ENCODE measurements at regions of chr19 and their contacts with region 1.

Region 1: GRCh38 chr19:50025024-50025789 is at the start of gene VRK3:
- DNase-seq: peak; percentile 100
- H3K4me3 ChIP-seq: peak within 1 kb of the TSS; percentile 76 to 97 (median 82)
- H3K4me3 Mint-ChIP-seq: peak within 1 kb of the TSS; percentile 94 to 98
- H3K27ac ChIP-seq: peak within 1 kb of the TSS; percentile 73 to 91
- H3K27ac Mint-ChIP-seq: peak within 1 kb of the TSS; percentile 96 to 100 (median 99)
- H3K4me1 ChIP-seq: peaks cover 23 to 31% of the 10 kb centered on the region in 2 donors
- H3K4me1 Mint-ChIP-seq: peaks cover 40% of the 10 kb centered on the region
- H3K27me3 ChIP-seq: no peaks in the 10 kb centered on the region
- H3K27me3 Mint-ChIP-seq: peaks cover 0 to 8% (median 5%) of the 10 kb centered on the region in 3 donors
- CTCF ChIP-seq: peak; percentile 12
- polyA plus RNA-seq, gene VRK3: 42.8 to 47.3 (median 46.8) TPM

Region 2: DNA sequence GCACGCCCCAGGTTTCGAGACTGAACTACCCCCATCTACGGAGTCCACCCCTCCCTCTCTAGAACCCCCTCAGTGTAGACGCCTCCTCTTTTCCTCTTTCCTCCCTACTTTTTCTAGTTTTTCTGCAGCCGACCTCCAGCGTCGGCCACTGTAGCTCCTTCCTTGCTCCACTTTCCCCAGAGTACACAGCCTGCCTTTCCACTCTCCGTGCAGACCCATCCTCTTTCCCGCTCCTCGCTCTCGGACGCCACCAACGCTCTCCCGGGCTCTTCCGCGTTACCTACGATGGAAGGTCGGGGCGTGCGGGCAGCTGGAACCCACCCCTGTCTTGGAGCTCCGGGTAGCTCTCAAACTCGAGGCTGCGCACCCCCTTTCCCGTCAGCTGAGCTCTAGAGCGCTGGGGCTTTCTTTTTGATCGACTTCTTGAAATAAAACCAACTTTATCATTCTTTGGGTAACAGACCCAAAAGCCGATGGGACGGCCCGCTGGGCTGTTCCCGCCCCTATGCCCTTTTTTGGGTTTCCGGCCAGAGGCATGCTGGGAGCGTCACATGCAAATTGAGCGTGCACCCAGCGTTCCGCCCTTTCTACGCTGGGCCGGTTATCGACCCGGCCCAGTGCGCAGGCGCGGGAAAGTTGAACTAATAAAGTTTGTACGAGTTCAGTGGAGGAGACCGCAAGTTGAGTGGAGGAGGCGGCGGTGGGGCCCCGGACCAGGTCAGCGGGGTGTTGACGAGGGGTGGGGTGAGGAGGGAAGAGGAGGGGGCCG is 359.7 kb before region 1 on chr19 and contains the starts of genes BCL2L12 and IRF3:
- intact Hi-C with region 1: loop called in 1 of 2 experiments (anchors 10 kb)
- DNase-seq: peak; percentile 95 to 97 (median 95)
- H3K4me3 ChIP-seq: peak within 1 kb of the TSS; percentile 52 to 94 (median 72)
- H3K4me3 Mint-ChIP-seq: peak within 1 kb of the TSS; percentile 97 to 100
- H3K27ac ChIP-seq: peak within 1 kb of the TSS; percentile 52 to 78
- H3K27ac Mint-ChIP-seq: peak within 1 kb of the TSS; percentile 89 to 99 (median 94)
- H3K4me1 ChIP-seq: peaks cover 17 to 35% of the 10 kb centered on the region in 2 donors
- H3K4me1 Mint-ChIP-seq: peaks cover 32% of the 10 kb centered on the region
- H3K27me3 ChIP-seq: no peaks in the 10 kb centered on the region
- H3K27me3 Mint-ChIP-seq: no peaks in the 10 kb centered on the region
- CTCF ChIP-seq: no peak
- polyA plus RNA-seq, gene BCL2L12: 5.7 to 10.3 (median 8.6) TPM
- polyA plus RNA-seq, gene IRF3: 29.8 to 115 (median 41.1) TPM

Region 3: DNA sequence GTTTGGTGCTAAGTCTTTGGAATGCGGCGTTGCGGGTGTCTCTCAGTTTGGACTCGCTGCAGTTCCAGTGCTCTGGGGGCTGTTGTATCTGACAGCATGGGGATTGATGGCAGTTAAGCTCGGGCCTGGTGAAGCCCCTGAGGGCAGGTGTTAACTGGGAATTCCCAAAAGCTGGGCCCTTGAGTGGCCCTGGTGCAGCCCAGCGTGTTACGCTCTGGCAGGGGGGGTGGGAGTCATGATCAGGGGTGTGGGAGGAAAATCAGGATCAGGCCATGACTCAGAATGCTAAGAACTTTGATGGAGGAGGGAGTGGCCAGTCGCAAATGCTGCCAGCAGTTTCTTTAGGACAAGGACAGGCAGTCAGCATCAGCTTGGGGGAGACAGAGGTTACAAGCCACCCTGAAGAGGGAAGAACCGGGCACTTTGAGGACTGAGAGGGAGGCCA is 238.8 kb before region 1 on chr19:
- intact Hi-C with region 1: no loop called
- DNase-seq: no peak
- H3K4me3 ChIP-seq: no peak overlapping the region
- H3K4me3 Mint-ChIP-seq: no peak overlapping the region
- H3K27ac ChIP-seq: peak overlapping the region in 1 of 2 donors; percentile 11
- H3K27ac Mint-ChIP-seq: peak overlapping the region in 2 of 7 donors; percentile 32 to 50
- H3K4me1 ChIP-seq: peaks cover 10 to 12% of the 10 kb centered on the region in 2 donors
- H3K4me1 Mint-ChIP-seq: peaks cover 11% of the 10 kb centered on the region
- H3K27me3 ChIP-seq: no peaks in the 10 kb centered on the region
- H3K27me3 Mint-ChIP-seq: no peaks in the 10 kb centered on the region
- CTCF ChIP-seq: no peak

Region 4: DNA sequence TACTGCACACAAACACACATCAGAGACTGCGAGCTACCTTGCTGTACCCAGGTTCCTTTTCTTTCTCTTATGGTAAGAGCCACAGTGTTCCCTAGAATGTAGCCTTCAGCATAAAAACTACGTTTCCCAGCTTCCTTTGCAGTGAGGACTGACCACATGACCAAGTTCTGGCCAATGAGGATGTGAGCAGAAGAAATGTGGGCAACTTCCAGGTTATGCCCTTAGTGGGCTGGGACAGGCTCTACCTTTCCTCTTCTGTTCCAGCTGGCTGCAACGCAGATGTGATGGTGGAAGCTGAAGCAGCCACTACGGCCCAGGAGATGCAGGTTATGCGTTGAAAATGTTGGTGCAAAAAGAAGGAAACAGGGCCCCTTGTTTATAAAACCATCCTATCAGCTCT is 27.5 kb before region 1 on chr19:
- intact Hi-C with region 1: no loop called
- DNase-seq: peak; percentile 29 to 58 (median 54)
- H3K4me3 ChIP-seq: no peak overlapping the region
- H3K4me3 Mint-ChIP-seq: no peak overlapping the region
- H3K27ac ChIP-seq: no peak overlapping the region
- H3K27ac Mint-ChIP-seq: no peak overlapping the region
- H3K4me1 ChIP-seq: peaks cover 8 to 16% of the 10 kb centered on the region in 2 donors
- H3K4me1 Mint-ChIP-seq: peaks cover 10% of the 10 kb centered on the region
- H3K27me3 ChIP-seq: no peaks in the 10 kb centered on the region
- H3K27me3 Mint-ChIP-seq: peaks cover 0 to 2% (median 1%) of the 10 kb centered on the region in 3 donors
- CTCF ChIP-seq: no peak

Region 5: GRCh38 chr19:50039968-50040367 is 14.8 kb after region 1 on chr19:
- intact Hi-C with region 1: no loop called
- DNase-seq: no peak
- H3K4me3 ChIP-seq: no peak overlapping the region
- H3K4me3 Mint-ChIP-seq: no peak overlapping the region
- H3K27ac ChIP-seq: no peak overlapping the region
- H3K27ac Mint-ChIP-seq: peak overlapping the region in 1 of 7 donors; percentile 17
- H3K4me1 ChIP-seq: no peaks in the 10 kb centered on the region
- H3K4me1 Mint-ChIP-seq: no peaks in the 10 kb centered on the region
- H3K27me3 ChIP-seq: no peaks in the 10 kb centered on the region
- H3K27me3 Mint-ChIP-seq: peaks cover 0 to 2% (median 2%) of the 10 kb centered on the region in 3 donors
- CTCF ChIP-seq: no peak

Region 6: GRCh38 chr19:50050384-50051224 is 25.4 kb after region 1 on chr19:
- intact Hi-C with region 1: loop called in 1 of 2 experiments (anchors 2 kb)
- DNase-seq: peak; percentile 84 to 89 (median 89)
- H3K4me3 ChIP-seq: peak overlapping the region; percentile 10 to 82 (median 62)
- H3K4me3 Mint-ChIP-seq: peak overlapping the region; percentile 94 to 95
- H3K27ac ChIP-seq: peak overlapping the region; percentile 45 to 80
- H3K27ac Mint-ChIP-seq: peak overlapping the region; percentile 74 to 92 (median 83)
- H3K4me1 ChIP-seq: peaks cover 12 to 13% of the 10 kb centered on the region in 2 donors
- H3K4me1 Mint-ChIP-seq: peaks cover 17% of the 10 kb centered on the region
- H3K27me3 ChIP-seq: no peaks in the 10 kb centered on the region
- H3K27me3 Mint-ChIP-seq: peaks cover 7 to 27% (median 9%) of the 10 kb centered on the region in 3 donors
- CTCF ChIP-seq: no peak

Region 7: DNA sequence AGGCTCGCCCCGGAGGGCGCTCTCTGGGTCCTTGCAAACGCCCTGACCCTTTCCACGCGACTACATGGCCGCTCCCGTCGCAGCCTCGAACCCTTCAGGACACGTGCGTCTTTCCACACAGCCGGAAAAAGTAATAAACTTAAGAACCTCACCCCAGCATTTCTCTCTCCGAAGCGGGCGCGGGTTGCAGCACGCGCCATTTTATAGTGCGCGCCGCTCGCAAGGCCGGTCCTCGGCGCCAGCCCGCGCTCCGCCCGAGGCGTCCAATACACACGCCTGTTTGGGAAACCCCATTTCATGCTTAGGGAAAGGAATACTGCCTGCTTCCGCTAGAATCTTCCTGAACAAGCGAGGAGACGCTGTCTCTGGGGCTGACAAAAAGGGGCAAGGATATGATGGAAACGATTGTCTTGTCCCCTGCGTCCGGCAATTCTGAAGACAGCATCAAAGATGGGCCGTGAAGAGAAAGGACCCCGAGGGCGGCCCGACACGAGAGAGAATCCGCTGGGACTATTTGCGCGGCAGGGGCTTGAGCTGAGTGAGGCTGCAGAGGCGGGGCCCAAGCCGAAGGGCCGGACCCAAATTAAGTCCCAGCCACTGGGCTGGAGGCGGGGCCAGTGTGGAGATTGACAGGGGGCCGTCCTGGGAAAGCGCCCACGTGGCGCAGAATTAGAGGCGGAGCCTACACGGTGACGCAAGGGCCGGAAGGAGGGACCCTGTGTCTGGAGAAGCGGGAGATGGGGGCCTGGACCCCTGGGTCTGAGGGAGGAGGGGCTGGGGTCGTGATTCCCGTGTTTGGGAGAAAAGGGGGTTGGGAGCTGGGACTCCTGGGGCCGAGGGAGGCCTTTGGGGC is 779.4 kb after region 1 on chr19:
- intact Hi-C with region 1: loop called in 1 of 2 experiments (anchors 10 kb)
- DNase-seq: peak; percentile 93 to 96 (median 96)
- H3K4me3 ChIP-seq: peak overlapping the region; percentile 69 to 99 (median 69)
- H3K4me3 Mint-ChIP-seq: peak overlapping the region; percentile 98 to 100
- H3K27ac ChIP-seq: peak overlapping the region; percentile 90 to 98
- H3K27ac Mint-ChIP-seq: peak overlapping the region; percentile 99 to 100 (median 100)
- H3K4me1 ChIP-seq: peaks cover 18 to 20% of the 10 kb centered on the region in 2 donors
- H3K4me1 Mint-ChIP-seq: peaks cover 22% of the 10 kb centered on the region
- H3K27me3 ChIP-seq: no peaks in the 10 kb centered on the region
- H3K27me3 Mint-ChIP-seq: peaks cover 4 to 5% (median 5%) of the 10 kb centered on the region in 3 donors
- CTCF ChIP-seq: no peak

Measured in CD14-positive monocyte (primary cell).